ENCODE measurements at regions of chr18 and their contacts with region 1.

Region 1: GRCh38 chr18:33231474-33232317 is 208.8 kb downstream of the CCDC178 start:
- DNase-seq: peak; percentile 53
- H3K4me3 ChIP-seq: no peak overlapping the region
- H3K27ac ChIP-seq: no peak overlapping the region
- H3K4me1 ChIP-seq: no peaks in the 10 kb centered on the region
- H3K27me3 ChIP-seq: no peaks in the 10 kb centered on the region
- CTCF ChIP-seq: peak; percentile 49 to 84 (median 76)
- POLR2A ChIP-seq: no peak

Region 2: DNA sequence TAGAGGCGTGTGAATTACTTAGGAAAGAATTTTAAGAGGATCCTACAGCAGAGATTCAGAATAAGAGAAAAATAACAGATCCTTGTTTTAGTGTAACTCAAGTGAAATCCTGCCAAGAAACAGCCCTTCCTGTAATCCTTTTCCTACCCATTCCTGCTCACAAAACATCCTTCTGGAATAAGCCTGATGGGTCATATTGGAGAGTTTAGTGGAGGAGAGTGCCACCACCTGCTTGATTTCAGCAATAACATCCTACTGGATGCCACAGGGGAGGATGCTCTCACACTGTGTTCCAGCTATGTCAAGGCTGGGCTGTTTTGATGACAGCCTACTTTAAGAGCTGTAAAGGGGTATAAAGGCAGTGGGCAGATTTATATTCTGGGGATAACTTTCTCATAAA is 263.6 kb after region 1 on chr18:
- intact Hi-C with region 1: loop called (anchors 2 kb)
- DNase-seq: no peak
- H3K4me3 ChIP-seq: no peak overlapping the region
- H3K27ac ChIP-seq: no peak overlapping the region
- H3K4me1 ChIP-seq: no peaks in the 10 kb centered on the region
- H3K27me3 ChIP-seq: no peaks in the 10 kb centered on the region
- CTCF ChIP-seq: peak in 2 of 4 experiments; percentile 42 to 61
- POLR2A ChIP-seq: no peak

Region 3: GRCh38 chr18:33761363-33761762 is 529.7 kb after region 1 on chr18:
- intact Hi-C with region 1: loop called (anchors 5 kb)
- DNase-seq: no peak
- H3K4me3 ChIP-seq: no peak overlapping the region
- H3K27ac ChIP-seq: no peak overlapping the region
- H3K4me1 ChIP-seq: no peaks in the 10 kb centered on the region
- H3K27me3 ChIP-seq: no peaks in the 10 kb centered on the region
- CTCF ChIP-seq: peak in 2 of 4 experiments; percentile 41 to 46
- POLR2A ChIP-seq: no peak

Measured in prostate gland (tissue), 2 donors.